ENCODE measurements at regions of chr20 and their contacts with region 1.

Region 1: GRCh38 chr20:41411391-41411847 is 44.8 kb upstream of the EMILIN3 start:
- DNase-seq: no peak
- H3K4me3 ChIP-seq: no peak overlapping the region
- H3K27ac ChIP-seq: no peak overlapping the region
- H3K4me1 ChIP-seq: no peaks in the 10 kb centered on the region
- H3K27me3 ChIP-seq: no peaks in the 10 kb centered on the region
- CTCF ChIP-seq: no peak

Region 2: DNA sequence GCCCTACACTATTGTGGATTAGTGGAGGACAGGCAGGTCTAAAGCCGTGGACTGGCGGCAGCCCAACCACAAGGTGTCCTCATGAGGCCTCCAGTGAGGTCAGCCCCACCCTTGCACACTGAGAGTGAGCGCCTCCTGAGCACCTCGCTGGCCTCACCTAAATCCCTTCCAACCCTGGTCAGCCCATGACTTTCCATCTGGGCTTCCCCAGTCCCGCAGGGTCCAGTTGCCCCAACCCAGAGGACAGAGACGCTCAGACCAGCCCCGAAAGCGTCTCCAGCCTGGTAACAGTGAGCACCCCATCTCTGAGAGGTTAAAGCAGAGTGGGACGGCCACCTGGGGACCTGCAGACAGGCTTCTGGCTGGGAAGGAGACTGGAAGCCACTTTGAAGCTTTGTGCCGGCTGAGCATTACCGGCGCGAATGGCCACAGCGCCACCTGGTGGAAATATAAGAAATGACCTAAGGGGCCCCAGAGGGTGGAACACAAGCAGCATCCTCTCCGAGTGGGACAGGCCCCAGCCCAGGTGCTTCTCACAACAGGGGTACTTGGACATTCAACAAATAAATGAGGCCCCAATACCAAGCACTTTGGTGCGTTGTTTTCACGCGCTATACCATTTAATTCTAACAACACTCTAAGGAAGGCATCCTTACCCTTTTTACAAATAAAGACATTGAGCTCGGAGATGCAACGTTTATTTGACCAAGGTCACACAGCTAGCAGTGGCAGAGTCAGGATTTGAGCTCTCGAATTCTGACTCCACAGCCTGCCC is 448.5 kb before region 1 on chr20:
- intact Hi-C with region 1: loop called (anchors 10 kb)
- DNase-seq: peak; percentile 74
- H3K4me3 ChIP-seq: no peak overlapping the region
- H3K27ac ChIP-seq: no peak overlapping the region
- H3K4me1 ChIP-seq: no peaks in the 10 kb centered on the region
- H3K27me3 ChIP-seq: no peaks in the 10 kb centered on the region
- CTCF ChIP-seq: peak; percentile 87

Region 3: DNA sequence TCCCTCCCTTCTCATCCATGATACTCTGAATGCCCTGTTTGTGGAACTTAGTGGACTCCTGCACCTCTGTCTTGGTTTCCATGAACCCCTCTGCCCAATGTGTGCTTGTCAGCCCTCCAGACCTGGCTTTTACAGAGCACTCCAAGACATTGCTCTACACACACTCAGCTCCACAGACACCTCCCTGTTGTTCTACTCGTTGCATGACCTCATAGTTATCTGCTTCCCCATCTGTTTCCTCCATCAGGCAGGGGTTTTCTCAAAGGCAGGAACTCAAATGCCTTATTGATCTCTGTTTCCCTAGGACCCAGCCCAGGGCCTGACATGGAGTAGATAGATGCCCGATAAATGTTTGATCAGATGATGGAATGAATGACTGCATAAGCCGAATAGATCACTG is 260.8 kb before region 1 on chr20:
- intact Hi-C with region 1: no loop called
- DNase-seq: no peak
- H3K4me3 ChIP-seq: no peak overlapping the region
- H3K27ac ChIP-seq: no peak overlapping the region
- H3K4me1 ChIP-seq: peaks cover 15% of the 10 kb centered on the region
- H3K27me3 ChIP-seq: no peaks in the 10 kb centered on the region
- CTCF ChIP-seq: no peak

Measured in colonic mucosa (tissue), 4 donors.